ENCODE measurements at regions of chr9 and their contacts with region 1.

Region 1: DNA sequence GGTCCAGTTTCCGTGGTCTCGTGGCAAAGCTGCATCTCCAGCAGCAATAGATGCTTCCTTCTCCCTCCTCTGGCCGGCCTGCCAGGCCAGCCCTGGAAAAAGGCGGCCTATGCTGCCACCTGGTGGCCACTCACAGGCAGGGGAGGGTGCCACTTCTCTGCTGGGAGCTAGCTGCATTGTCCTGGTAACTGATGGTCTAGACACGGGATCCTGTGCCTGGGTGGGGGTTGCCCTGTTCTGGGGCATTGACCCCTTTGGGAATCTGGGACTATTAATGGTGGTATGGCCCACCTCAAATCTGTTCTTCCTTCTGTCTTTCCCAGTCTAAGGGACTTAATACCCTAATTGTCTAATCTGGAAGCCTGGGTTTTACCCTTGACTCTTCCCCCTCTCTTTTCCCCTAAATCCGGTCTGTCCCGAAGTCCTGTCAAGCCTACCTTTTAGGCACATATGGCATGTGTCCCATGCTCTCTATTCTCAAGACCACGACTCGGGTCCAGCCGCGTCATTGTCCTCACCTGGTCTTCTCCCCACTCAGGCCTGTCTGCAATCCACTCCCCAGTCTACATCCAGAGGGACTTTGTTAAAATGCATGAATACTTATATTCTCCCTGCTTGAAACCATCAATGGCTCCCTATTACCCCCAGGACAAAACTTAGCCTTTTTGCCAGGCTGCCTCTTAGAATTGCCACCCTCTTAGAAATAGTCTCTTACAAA is 20.0 kb upstream of the PTGS1 start:
- DNase-seq: peak; percentile 76 to 92 (median 78)
- ATAC-seq: peak; percentile 81 to 89 (median 83)
- H3K4me3 ChIP-seq: no peak overlapping the region
- H3K27ac ChIP-seq: no peak overlapping the region
- H3K4me1 ChIP-seq: peaks cover 0 to 28% (median 17%) of the 10 kb centered on the region in 12 donors
- H3K27me3 ChIP-seq: peaks cover 0 to 5% (median 0%) of the 10 kb centered on the region in 9 donors
- CTCF ChIP-seq: peak; percentile 94 to 99 (median 96)
- POLR2A ChIP-seq: no peak

Region 2: GRCh38 chr9:122144836-122145591 is 205.8 kb before region 1 on chr9:
- intact Hi-C with region 1: loop called in 1 of 10 experiments (anchors 5 kb)
- DNase-seq: no peak
- ATAC-seq: peak in 1 of 4 donors; percentile 59
- H3K4me3 ChIP-seq: no peak overlapping the region
- H3K27ac ChIP-seq: peak overlapping the region in 2 of 12 donors; percentile 38 to 56
- H3K4me1 ChIP-seq: peaks cover 7 to 51% (median 25%) of the 10 kb centered on the region in 12 donors
- H3K27me3 ChIP-seq: no peaks in the 10 kb centered on the region
- CTCF ChIP-seq: peak; percentile 12 to 58 (median 36)
- POLR2A ChIP-seq: no peak

Region 3: GRCh38 chr9:122264360-122265148 is 86.2 kb before region 1 on chr9 and contains the starts of genes MRRF and RBM18:
- intact Hi-C with region 1: loop called in 6 of 10 experiments (anchors 2 to 10 kb)
- DNase-seq: peak; percentile 92 to 95 (median 93)
- ATAC-seq: peak; percentile 76 to 93 (median 90)
- H3K4me3 ChIP-seq: peak within 1 kb of the TSS; percentile 52 to 77 (median 72)
- H3K27ac ChIP-seq: peak within 1 kb of the TSS; percentile 78 to 97 (median 94)
- H3K4me1 ChIP-seq: peaks cover 19 to 61% (median 44%) of the 10 kb centered on the region in 12 donors
- H3K27me3 ChIP-seq: no peaks in the 10 kb centered on the region
- CTCF ChIP-seq: peak in 1 of 12 donors; percentile 7
- POLR2A ChIP-seq: peak in 1 of 2 donors; percentile 74
- total RNA-seq, gene MRRF: 29.2 to 44.5 (median 36.0) TPM
- total RNA-seq, gene RBM18: 24.7 to 49.0 (median 38.4) TPM

Region 4: DNA sequence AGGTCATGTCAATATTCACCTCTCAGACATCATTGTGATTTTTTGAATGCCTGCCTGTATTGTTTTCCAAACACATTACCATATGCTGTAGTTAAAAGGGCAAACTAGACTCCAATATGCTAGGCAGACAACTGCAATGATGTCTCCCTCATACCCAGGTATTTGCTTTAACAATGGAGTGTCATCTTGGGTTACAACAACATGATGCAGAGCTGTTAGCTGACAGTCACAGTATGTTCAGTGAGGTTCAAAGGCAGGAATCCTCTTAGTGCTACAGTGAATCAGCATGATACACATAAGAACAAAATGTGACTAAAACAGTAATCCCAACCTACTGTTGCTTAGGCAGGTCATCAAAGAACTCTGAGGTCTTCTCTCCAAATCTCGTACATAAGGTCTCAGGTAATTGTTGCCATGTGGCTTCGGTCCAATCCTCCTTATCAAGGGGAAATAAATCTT is 102.9 kb after region 1 on chr9:
- intact Hi-C with region 1: loop called in 1 of 10 experiments (anchors 5 kb)
- DNase-seq: no peak
- ATAC-seq: no peak
- H3K4me3 ChIP-seq: no peak overlapping the region
- H3K27ac ChIP-seq: no peak overlapping the region
- H3K4me1 ChIP-seq: no peaks in the 10 kb centered on the region
- H3K27me3 ChIP-seq: peaks cover 0 to 10% (median 0%) of the 10 kb centered on the region in 9 donors
- CTCF ChIP-seq: no peak
- POLR2A ChIP-seq: no peak

Measured in heart left ventricle (tissue), 16 donors.